Heart left ventricle (tissue), 16 donors: ENCODE measurements at regions of chr3 and their contacts with region 1.

Region 1: GRCh38 chr3:69671082-69671952 is 67.9 kb upstream of the MITF start:
- DNase-seq: peak in 4 of 5 donors; percentile 22 to 38 (median 28)
- ATAC-seq: peak; percentile 32 to 67 (median 63)
- H3K4me3 ChIP-seq: no peak overlapping the region
- H3K27ac ChIP-seq: no peak overlapping the region
- H3K4me1 ChIP-seq: peaks cover 0 to 13% (median 0%) of the 10 kb centered on the region in 12 donors
- H3K27me3 ChIP-seq: no peaks in the 10 kb centered on the region
- CTCF ChIP-seq: peak; percentile 65 to 90 (median 81)
- POLR2A ChIP-seq: no peak

Region 2: DNA sequence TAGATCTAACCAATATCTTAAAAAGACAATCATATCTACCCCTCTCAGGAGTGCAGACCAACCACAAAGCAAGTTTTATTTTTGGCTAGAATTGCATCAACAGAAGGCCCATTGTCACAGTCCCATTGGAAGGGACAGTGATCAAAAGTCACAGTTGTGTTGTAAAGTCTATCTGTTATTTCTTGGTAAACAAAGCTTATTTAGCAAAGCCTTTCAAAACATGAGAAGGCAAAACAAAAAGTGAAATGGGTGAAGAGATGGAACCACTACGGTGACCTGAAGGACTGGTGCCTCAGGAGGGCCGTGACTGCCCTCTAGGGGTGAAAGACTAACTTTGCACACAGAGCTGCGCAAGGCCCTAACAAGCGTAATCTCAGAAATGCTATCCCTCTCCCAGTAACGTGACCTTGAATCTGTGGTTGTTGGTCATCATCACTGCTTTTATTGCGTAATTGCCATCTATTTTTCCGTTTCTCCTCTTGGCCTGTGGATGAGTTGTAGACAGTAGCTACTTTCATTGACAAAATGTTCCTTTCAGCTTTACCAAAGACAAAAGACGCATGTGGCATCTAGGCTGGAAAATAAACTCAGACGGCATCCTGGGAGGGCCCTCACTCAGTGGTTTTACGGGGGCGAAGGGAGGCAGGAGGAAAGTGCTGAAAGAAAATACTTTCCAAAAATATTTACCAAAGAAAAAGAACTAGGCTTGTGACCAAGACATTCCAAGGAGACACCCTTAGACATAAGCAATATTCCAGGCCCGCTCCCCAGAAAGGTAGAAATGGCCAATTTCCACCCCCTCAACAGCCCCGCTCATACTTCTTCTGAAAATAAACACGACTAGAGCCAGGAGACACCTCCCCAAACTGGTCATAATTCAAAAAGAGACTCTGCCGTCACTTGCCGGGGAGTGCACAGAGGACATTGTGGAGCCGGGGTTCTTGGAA is 364.8 kb before region 1 on chr3:
- intact Hi-C with region 1: loop called in 6 of 10 experiments (anchors 5 kb)
- DNase-seq: peak; percentile 66 to 82 (median 78)
- ATAC-seq: peak; percentile 80 to 98 (median 94)
- H3K4me3 ChIP-seq: no peak overlapping the region
- H3K27ac ChIP-seq: peak overlapping the region in 10 of 12 donors; percentile 26 to 83 (median 70)
- H3K4me1 ChIP-seq: peaks cover 0 to 21% (median 7%) of the 10 kb centered on the region in 12 donors
- H3K27me3 ChIP-seq: no peaks in the 10 kb centered on the region
- CTCF ChIP-seq: peak; percentile 88 to 99 (median 94)
- POLR2A ChIP-seq: no peak

Region 3: DNA sequence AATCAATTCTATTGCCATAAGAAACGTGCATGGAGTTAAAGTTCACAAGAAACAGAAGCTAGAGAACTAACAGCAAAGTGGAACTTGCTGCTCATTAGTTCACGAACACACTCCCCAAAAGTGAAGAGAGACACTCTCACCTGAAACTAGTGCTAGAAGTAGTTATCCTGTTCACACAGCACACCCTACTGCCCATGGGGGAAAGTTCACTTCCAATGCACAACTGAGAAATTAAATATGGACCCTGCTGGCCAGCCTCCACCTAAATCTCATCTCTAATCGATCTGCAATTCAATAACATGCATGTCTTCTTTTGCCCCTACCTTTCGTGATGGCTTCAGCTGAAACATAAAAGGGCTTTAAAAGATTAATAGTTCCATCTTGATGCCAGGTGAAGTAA is 246.1 kb before region 1 on chr3:
- intact Hi-C with region 1: loop called in 3 of 10 experiments (anchors 5 to 10 kb)
- DNase-seq: peak in 1 of 5 donors; percentile 30
- ATAC-seq: peak in 3 of 4 donors; percentile 56 to 70 (median 59)
- H3K4me3 ChIP-seq: no peak overlapping the region
- H3K27ac ChIP-seq: no peak overlapping the region
- H3K4me1 ChIP-seq: peaks cover 0 to 14% (median 10%) of the 10 kb centered on the region in 12 donors
- H3K27me3 ChIP-seq: no peaks in the 10 kb centered on the region
- CTCF ChIP-seq: peak; percentile 31 to 68 (median 52)
- POLR2A ChIP-seq: no peak

Region 4: DNA sequence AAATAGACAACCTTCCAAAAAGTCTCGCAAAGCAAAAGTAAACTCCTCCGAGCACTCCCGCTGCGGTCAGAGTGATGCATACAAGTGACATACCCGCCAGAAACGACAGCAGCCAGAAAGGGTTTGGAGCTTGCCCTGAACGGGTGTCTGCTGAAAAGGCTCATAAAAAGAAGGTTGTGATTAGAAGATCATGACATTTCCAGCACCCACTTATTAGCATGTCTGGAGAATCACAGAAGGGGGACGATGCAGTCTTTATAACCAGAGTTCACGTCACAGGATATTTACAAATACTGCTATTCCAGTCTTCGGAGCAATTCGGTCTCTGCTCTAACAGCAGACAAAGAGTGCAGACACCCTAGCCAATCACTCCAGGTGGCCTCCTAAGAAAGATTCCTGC is 226.3 kb before region 1 on chr3:
- intact Hi-C with region 1: loop called in 7 of 10 experiments (anchors 5 to 10 kb)
- DNase-seq: no peak
- ATAC-seq: peak in 1 of 4 donors; percentile 58
- H3K4me3 ChIP-seq: peak overlapping the region in 7 of 12 donors; percentile 2 to 48 (median 26)
- H3K27ac ChIP-seq: no peak overlapping the region
- H3K4me1 ChIP-seq: no peaks in the 10 kb centered on the region
- H3K27me3 ChIP-seq: no peaks in the 10 kb centered on the region
- CTCF ChIP-seq: no peak
- POLR2A ChIP-seq: no peak

Region 5: GRCh38 chr3:69724722-69725435 is 53.6 kb after region 1 on chr3:
- intact Hi-C with region 1: no loop called
- DNase-seq: no peak
- ATAC-seq: peak; percentile 48 to 87 (median 86)
- H3K4me3 ChIP-seq: no peak overlapping the region
- H3K27ac ChIP-seq: peak overlapping the region in 8 of 12 donors; percentile 36 to 76 (median 51)
- H3K4me1 ChIP-seq: peaks cover 0 to 22% (median 0%) of the 10 kb centered on the region in 12 donors
- H3K27me3 ChIP-seq: no peaks in the 10 kb centered on the region
- CTCF ChIP-seq: no peak
- POLR2A ChIP-seq: no peak